SK-N-SH (cell line): ENCODE measurements at regions of chr12 and their contacts with region 1.

Region 1: GRCh38 chr12:71636704-71637115 is 26.9 kb downstream of the ZFC3H1 start:
- DNase-seq: peak; percentile 53
- H3K4me3 ChIP-seq: no peak overlapping the region
- H3K27ac ChIP-seq: no peak overlapping the region; a peak in 1 of 4 replicates
- H3K4me1 ChIP-seq: peaks cover 0 to 5% of the 10 kb centered on the region in 2 experiments; a peak in 2 of 4 replicates
- H3K27me3 ChIP-seq: no peaks in the 10 kb centered on the region
- CTCF ChIP-seq: peak; percentile 84
- EP300 ChIP-seq: no peak
- RAD21 ChIP-seq: peak; percentile 85

Region 2: GRCh38 chr12:71439362-71440314 is 197.1 kb before region 1 on chr12 and contains the start of gene LGR5:
- CTCF ChIA-PET with region 1: interaction called, 13 read pairs
- POLR2A ChIA-PET with region 1: no interaction called
- DNase-seq: peak; percentile 91
- H3K4me3 ChIP-seq: peak within 1 kb of the TSS; percentile 57
- H3K27ac ChIP-seq: peak within 1 kb of the TSS in 1 of 2 experiments; percentile 50; a peak in 1 of 4 replicates
- H3K4me1 ChIP-seq: peaks cover 8 to 21% of the 10 kb centered on the region in 2 experiments; a peak in 3 of 4 replicates
- H3K27me3 ChIP-seq: peaks cover 30% of the 10 kb centered on the region
- CTCF ChIP-seq: no peak
- EP300 ChIP-seq: no peak
- RAD21 ChIP-seq: no peak; the same call in 1 of the 2 replicates
- polyA plus RNA-seq, gene LGR5: 1.4 and 5.6 TPM in 2 replicates

Region 3: GRCh38 chr12:71551529-71551928 is 85.2 kb before region 1 on chr12:
- CTCF ChIA-PET with region 1: interaction called, 12 read pairs
- POLR2A ChIA-PET with region 1: no interaction called
- DNase-seq: peak; percentile 22
- H3K4me3 ChIP-seq: no peak overlapping the region
- H3K27ac ChIP-seq: no peak overlapping the region
- H3K4me1 ChIP-seq: no peaks in the 10 kb centered on the region; a peak in 1 of 4 replicates
- H3K27me3 ChIP-seq: no peaks in the 10 kb centered on the region
- CTCF ChIP-seq: peak; percentile 58
- EP300 ChIP-seq: no peak
- RAD21 ChIP-seq: peak; percentile 81

Region 4: GRCh38 chr12:71610031-71610795 is 26.5 kb before region 1 on chr12:
- CTCF ChIA-PET with region 1: interaction called, 14 read pairs
- POLR2A ChIA-PET with region 1: no interaction called
- DNase-seq: no peak
- H3K4me3 ChIP-seq: no peak overlapping the region
- H3K27ac ChIP-seq: no peak overlapping the region; a peak in 1 of 4 replicates
- H3K4me1 ChIP-seq: no peaks in the 10 kb centered on the region; a peak in 1 of 4 replicates
- H3K27me3 ChIP-seq: no peaks in the 10 kb centered on the region
- CTCF ChIP-seq: no peak
- EP300 ChIP-seq: no peak
- RAD21 ChIP-seq: no peak

Region 5: DNA sequence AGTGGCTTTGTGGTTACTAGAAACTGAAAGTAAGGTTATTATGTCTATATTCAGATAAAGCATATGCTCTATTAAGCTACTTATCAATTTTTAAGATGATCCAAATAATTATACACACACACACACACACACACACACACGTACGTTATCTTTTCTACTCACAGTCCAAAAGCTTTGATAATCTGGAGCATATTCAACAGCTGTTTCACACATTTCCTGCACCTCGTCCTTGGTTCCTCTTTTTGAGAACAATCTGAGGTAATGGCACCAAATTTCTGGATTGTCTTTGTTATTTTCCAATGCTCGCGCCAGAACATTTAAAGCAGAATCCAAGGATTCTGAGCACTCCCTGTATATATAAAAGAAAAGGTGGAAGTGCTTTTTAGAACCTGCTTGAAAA is 10.6 kb before region 1 on chr12:
- CTCF ChIA-PET with region 1: interaction called, 17 read pairs
- POLR2A ChIA-PET with region 1: no interaction called
- DNase-seq: no peak
- H3K4me3 ChIP-seq: no peak overlapping the region
- H3K27ac ChIP-seq: peak overlapping the region in 1 of 2 experiments; percentile 77; a peak in 2 of 4 replicates
- H3K4me1 ChIP-seq: peaks cover 0 to 17% of the 10 kb centered on the region in 2 experiments; a peak in 2 of 4 replicates
- H3K27me3 ChIP-seq: no peaks in the 10 kb centered on the region
- CTCF ChIP-seq: no peak
- EP300 ChIP-seq: no peak
- RAD21 ChIP-seq: no peak

Region 6: GRCh38 chr12:71731751-71732712 is 95.3 kb after region 1 on chr12:
- CTCF ChIA-PET with region 1: no interaction called
- POLR2A ChIA-PET with region 1: no interaction called
- DNase-seq: no peak
- H3K4me3 ChIP-seq: no peak overlapping the region
- H3K27ac ChIP-seq: peak overlapping the region in 1 of 2 experiments; percentile 65; a peak in 2 of 4 replicates
- H3K4me1 ChIP-seq: no peaks in the 10 kb centered on the region
- H3K27me3 ChIP-seq: no peaks in the 10 kb centered on the region
- CTCF ChIP-seq: no peak
- EP300 ChIP-seq: no peak
- RAD21 ChIP-seq: no peak